Mammary epithelial cell (primary cell): ENCODE measurements at regions of chr16 and their contacts with region 1.

Region 1: DNA sequence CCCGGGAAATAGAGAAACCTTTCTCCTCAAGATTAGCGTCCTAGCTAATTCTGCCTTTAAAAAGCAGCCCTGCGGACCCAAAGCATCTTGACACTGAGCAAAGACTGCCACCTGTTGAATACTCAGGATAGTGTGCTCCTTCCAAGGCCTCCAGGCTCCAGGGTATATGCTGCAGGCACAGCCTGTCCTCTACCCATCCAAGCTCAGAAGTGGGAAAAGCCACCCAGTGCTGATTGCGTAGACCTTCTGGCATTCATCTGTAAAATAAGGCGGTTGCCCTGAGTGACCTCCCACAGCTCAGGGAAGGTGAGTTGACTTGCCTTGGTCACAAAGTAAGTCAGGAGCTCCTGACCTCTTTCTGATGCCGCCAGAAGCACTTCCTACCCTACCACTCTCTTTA is 456.1 kb upstream of the DYNLRB2 start:
- DNase-seq: peak; percentile 57
- H3K4me3 ChIP-seq: no peak overlapping the region
- H3K27ac ChIP-seq: no peak overlapping the region
- H3K4me1 ChIP-seq: no peaks in the 10 kb centered on the region
- H3K27me3 ChIP-seq: no peaks in the 10 kb centered on the region
- CTCF ChIP-seq: peak; percentile 58 to 72

Region 2: DNA sequence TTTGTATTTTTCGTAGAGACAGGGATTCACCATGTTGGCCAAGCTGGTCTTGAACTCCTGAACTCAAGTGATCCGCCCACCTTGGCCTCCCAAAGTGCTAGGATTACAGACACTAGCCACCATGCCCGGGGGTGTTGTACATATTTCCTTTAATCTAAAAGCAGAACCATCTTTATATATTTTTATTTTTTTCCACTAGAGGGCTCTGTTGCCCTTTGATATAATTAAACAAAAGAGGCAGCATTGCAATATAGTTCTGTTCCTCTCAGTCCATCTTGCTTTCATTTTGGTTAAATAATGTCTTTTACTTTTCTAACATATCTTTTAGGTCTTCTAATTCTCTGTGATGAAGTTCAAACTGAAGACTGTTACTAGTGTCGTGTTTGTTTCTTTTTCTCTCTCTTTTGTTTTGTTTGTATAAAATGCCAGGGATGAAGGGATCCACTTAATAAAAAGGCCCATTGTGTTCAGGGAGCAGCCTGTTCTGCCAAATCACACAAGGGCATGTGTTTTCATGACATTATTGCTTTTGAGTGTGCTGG is 1961.8 kb before region 1 on chr16:
- CTCF ChIA-PET with region 1: no interaction called
- dilution Hi-C with region 1: no loop called
- in situ Hi-C with region 1: no loop called
- intact Hi-C with region 1: loop called (anchors 2 kb)
- DNase-seq: peak; percentile 57
- H3K4me3 ChIP-seq: peak overlapping the region in 2 of 3 experiments; percentile 32 to 46
- H3K27ac ChIP-seq: peak overlapping the region; percentile 62
- H3K4me1 ChIP-seq: peaks cover 3% of the 10 kb centered on the region
- H3K27me3 ChIP-seq: no peaks in the 10 kb centered on the region
- CTCF ChIP-seq: peak; percentile 18 to 33

Region 3: GRCh38 chr16:79770244-79771064 is 314.2 kb before region 1 on chr16:
- CTCF ChIA-PET with region 1: no interaction called
- dilution Hi-C with region 1: no loop called
- in situ Hi-C with region 1: no loop called
- intact Hi-C with region 1: loop called (anchors 1 kb)
- DNase-seq: peak; percentile 88
- H3K4me3 ChIP-seq: peak overlapping the region; percentile 59 to 62 (median 61)
- H3K27ac ChIP-seq: peak overlapping the region; percentile 30
- H3K4me1 ChIP-seq: peaks cover 28% of the 10 kb centered on the region
- H3K27me3 ChIP-seq: no peaks in the 10 kb centered on the region
- CTCF ChIP-seq: peak in 1 of 2 donors; percentile 18

Region 4: DNA sequence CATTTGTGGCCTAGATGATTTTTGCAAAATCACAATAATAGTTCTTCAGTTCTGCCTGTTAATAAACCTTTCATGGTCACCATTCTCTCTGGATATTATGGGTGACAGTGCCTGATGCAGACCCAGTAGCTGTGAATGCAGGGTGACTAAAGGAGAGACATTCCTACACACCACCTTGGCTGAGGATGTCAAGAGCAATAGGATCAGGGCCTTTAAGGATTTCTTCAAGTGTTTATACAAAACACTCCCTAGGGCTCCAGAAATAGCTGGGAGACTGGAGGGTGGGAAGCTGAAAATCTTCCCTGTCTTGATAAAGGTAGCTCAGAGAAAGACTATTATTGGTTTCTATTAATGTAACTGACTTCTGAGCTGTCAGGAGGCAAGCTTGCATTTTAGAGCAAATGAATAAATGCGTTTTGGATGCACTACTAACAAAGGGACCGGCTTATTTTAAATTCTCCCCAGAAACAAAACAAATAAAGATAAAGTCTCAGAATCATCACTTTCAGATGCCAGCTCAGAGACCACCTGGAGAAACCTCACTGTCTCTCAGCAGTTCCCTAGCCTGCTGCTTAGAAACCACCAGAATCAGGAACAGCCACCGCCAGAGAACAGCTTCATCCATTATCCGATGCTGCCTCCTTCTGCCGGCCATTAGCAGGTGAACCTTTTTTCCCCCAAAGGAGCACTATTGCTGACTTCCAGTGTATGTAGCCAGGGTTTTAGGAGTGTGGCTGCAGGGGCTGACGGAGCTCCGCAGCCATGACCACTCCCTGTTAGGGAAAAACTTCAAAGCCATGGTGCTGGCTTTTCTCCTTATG is 284.7 kb after region 1 on chr16:
- CTCF ChIA-PET with region 1: no interaction called
- dilution Hi-C with region 1: no loop called
- in situ Hi-C with region 1: no loop called
- intact Hi-C with region 1: loop called (anchors 1 kb)
- DNase-seq: peak; percentile 39
- H3K4me3 ChIP-seq: no peak overlapping the region
- H3K27ac ChIP-seq: no peak overlapping the region
- H3K4me1 ChIP-seq: peaks cover 4% of the 10 kb centered on the region
- H3K27me3 ChIP-seq: no peaks in the 10 kb centered on the region
- CTCF ChIP-seq: peak; percentile 70 to 85

Region 5: GRCh38 chr16:80526425-80527061 is 441.9 kb after region 1 on chr16:
- CTCF ChIA-PET with region 1: no interaction called
- dilution Hi-C with region 1: no loop called
- in situ Hi-C with region 1: no loop called
- intact Hi-C with region 1: loop called (anchors 10 kb)
- DNase-seq: peak; percentile 43
- H3K4me3 ChIP-seq: no peak overlapping the region
- H3K27ac ChIP-seq: no peak overlapping the region
- H3K4me1 ChIP-seq: no peaks in the 10 kb centered on the region
- H3K27me3 ChIP-seq: no peaks in the 10 kb centered on the region
- CTCF ChIP-seq: peak; percentile 84 to 94